Mammary epithelial cell (primary cell): ENCODE measurements at regions of chr20 and their contacts with region 1.

Region 1: GRCh38 chr20:5141615-5142014 is 14.8 kb downstream of the CDS2 start:
- DNase-seq: no peak
- H3K4me3 ChIP-seq: no peak overlapping the region
- H3K27ac ChIP-seq: no peak overlapping the region
- H3K4me1 ChIP-seq: no peaks in the 10 kb centered on the region
- H3K27me3 ChIP-seq: no peaks in the 10 kb centered on the region
- CTCF ChIP-seq: no peak

Region 2: GRCh38 chr20:4730780-4731179 is 410.8 kb before region 1 on chr20:
- CTCF ChIA-PET with region 1: no interaction called
- dilution Hi-C with region 1: no loop called
- in situ Hi-C with region 1: no loop called
- intact Hi-C with region 1: no loop called
- DNase-seq: no peak
- H3K4me3 ChIP-seq: no peak overlapping the region
- H3K27ac ChIP-seq: no peak overlapping the region
- H3K4me1 ChIP-seq: peaks cover 4% of the 10 kb centered on the region
- H3K27me3 ChIP-seq: no peaks in the 10 kb centered on the region
- CTCF ChIP-seq: no peak

Region 3: DNA sequence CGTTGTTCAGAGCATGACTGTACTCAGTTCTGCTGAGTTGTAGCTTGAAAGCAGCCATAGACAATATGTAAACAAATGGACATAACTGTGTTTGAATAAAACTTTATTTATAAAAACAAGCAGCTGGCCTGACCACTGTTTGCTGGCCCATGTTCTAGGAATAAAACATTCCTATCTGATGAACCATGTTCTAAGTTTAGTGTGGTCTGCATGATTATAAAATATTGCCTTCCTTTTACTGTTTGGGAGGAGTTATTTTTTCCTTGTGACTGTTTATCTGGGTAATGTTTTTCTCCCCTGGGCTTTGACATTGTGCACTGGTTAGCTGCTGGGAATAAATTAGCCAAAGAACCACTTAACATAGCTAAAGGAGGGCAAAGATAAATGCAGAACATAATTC is 40.3 kb after region 1 on chr20:
- CTCF ChIA-PET with region 1: interaction called, 8 read pairs
- dilution Hi-C with region 1: no loop called
- in situ Hi-C with region 1: loop called in 1 of 2 experiments (anchors 5 kb)
- intact Hi-C with region 1: no loop called
- DNase-seq: peak; percentile 6
- H3K4me3 ChIP-seq: no peak overlapping the region
- H3K27ac ChIP-seq: no peak overlapping the region
- H3K4me1 ChIP-seq: peaks cover 3% of the 10 kb centered on the region
- H3K27me3 ChIP-seq: no peaks in the 10 kb centered on the region
- CTCF ChIP-seq: no peak